CD8-positive, alpha-beta T cell (primary cell): ENCODE measurements at regions of chr7 and their contacts with region 1.

Region 1: DNA sequence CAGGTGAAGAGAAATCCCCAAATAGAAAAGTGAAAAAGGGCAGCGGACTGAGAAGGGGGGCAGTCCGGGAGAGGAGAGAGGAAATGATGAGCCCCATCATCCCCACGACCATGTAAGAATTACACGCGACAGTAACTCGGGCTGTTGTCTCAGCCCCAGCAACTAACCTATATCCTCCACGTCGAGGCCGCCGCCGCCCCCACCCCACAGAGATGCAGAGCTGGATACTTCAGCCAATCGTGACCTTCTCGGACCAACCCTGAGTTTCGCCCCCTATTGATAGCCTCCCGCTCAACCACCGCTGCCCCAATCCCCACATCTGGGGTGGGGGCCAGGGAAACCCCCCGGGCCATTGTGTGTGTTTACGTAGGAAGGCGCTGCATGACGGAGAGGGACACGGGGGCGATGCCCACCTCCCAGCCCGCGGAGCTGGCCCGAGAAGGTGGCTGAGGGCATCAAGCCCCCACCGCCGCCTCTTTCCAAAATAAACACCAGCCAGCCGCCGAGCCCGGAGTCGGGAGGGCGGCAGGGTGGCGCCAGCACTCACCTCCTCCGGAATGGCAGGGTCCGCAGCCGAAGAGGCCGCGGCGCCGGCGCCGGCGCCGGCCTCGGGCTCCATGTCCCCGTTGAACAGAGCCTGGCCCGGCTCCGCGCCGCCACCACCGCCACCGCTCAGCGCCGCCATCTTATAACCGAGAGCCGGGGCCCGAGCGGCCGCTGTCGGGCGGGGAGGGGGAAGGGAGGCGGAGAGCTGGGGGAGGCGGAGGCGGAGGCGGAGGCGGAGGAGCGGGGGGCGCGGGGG is 509 bp downstream of the BRAF start:
- DNase-seq: peak; percentile 55 to 95 (median 75)
- ATAC-seq: peak; percentile 65
- H3K4me3 ChIP-seq: peak overlapping the region; percentile 93
- H3K4me3 Mint-ChIP-seq: no peak overlapping the region
- H3K27ac ChIP-seq: peak overlapping the region; percentile 96 to 97
- H3K27ac Mint-ChIP-seq: no peak overlapping the region
- H3K4me1 ChIP-seq: peaks cover 13% of the 10 kb centered on the region
- H3K4me1 Mint-ChIP-seq: peaks cover 15% of the 10 kb centered on the region
- H3K27me3 ChIP-seq: no peaks in the 10 kb centered on the region
- H3K27me3 Mint-ChIP-seq: no peaks in the 10 kb centered on the region
- CTCF ChIP-seq: no peak

Region 2: DNA sequence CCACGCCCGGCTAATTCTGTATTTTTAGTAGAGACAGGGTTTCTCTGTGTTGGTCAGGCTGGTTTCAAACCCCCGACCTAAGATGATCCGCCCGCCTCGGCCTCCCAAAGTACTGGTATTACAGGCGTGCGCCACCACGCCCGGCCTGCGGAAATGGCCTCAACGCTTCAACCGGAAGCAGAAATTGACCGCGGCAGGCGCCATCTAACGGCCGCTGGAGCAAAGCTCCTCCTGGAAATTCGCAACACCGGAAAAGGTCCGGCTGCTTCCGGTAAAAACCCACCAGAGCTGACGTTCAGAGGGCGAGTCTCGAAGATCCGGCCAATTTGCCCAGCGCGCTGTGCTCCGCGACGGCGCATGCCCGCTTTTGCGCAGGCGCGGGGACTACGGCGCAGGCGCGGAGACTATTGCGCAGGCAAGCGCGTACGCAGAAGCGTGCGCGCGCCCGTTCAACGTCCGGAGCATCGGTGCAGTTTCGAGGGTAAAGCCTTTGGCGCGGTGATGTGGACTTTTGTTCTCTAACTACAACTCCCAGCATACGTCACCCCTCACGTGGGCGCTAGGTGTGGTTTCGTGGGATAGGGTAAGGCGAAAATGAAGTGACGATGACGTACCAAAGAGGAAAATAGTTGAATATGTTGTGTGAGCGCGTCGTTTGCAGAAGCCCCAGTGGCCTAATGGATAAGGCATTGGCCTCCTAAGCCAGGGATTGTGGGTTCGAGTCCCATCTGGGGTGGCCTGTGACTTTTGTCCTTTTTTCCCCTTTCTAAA is 1584.0 kb before region 1 on chr7:
- CTCF ChIA-PET with region 1: no interaction called
- POLR2A ChIA-PET with region 1: no interaction called
- intact Hi-C with region 1: loop called in 1 of 2 experiments (anchors 10 kb)
- DNase-seq: peak; percentile 95 to 100 (median 97)
- ATAC-seq: peak; percentile 80
- H3K4me3 ChIP-seq: peak overlapping the region; percentile 69 to 85
- H3K4me3 Mint-ChIP-seq: peak overlapping the region; percentile 98
- H3K27ac ChIP-seq: peak overlapping the region; percentile 94 to 98
- H3K27ac Mint-ChIP-seq: peak overlapping the region; percentile 100
- H3K4me1 ChIP-seq: peaks cover 13% of the 10 kb centered on the region
- H3K4me1 Mint-ChIP-seq: peaks cover 32% of the 10 kb centered on the region
- H3K27me3 ChIP-seq: no peaks in the 10 kb centered on the region
- H3K27me3 Mint-ChIP-seq: peaks cover 2% of the 10 kb centered on the region
- CTCF ChIP-seq: peak; percentile 36

Region 3: GRCh38 chr7:140673063-140673773 is 251.0 kb before region 1 on chr7:
- CTCF ChIA-PET with region 1: no interaction called
- POLR2A ChIA-PET with region 1: no interaction called
- intact Hi-C with region 1: loop called in 1 of 2 experiments (anchors 5 kb)
- DNase-seq: peak; percentile 30 to 79 (median 65)
- ATAC-seq: peak; percentile 77
- H3K4me3 ChIP-seq: peak overlapping the region; percentile 56 to 64
- H3K4me3 Mint-ChIP-seq: peak overlapping the region; percentile 88
- H3K27ac ChIP-seq: peak overlapping the region; percentile 68 to 80
- H3K27ac Mint-ChIP-seq: peak overlapping the region; percentile 93
- H3K4me1 ChIP-seq: peaks cover 22% of the 10 kb centered on the region
- H3K4me1 Mint-ChIP-seq: peaks cover 41% of the 10 kb centered on the region
- H3K27me3 ChIP-seq: no peaks in the 10 kb centered on the region
- H3K27me3 Mint-ChIP-seq: no peaks in the 10 kb centered on the region
- CTCF ChIP-seq: no peak

Region 4: GRCh38 chr7:140810830-140811556 is 113.2 kb before region 1 on chr7:
- CTCF ChIA-PET with region 1: interaction called, 6 read pairs
- POLR2A ChIA-PET with region 1: no interaction called
- intact Hi-C with region 1: loop called (anchors 2 to 5 kb)
- DNase-seq: peak; percentile 17 to 82 (median 61)
- ATAC-seq: peak; percentile 72
- H3K4me3 ChIP-seq: no peak overlapping the region
- H3K4me3 Mint-ChIP-seq: no peak overlapping the region
- H3K27ac ChIP-seq: no peak overlapping the region
- H3K27ac Mint-ChIP-seq: no peak overlapping the region
- H3K4me1 ChIP-seq: no peaks in the 10 kb centered on the region
- H3K4me1 Mint-ChIP-seq: peaks cover 4% of the 10 kb centered on the region
- H3K27me3 ChIP-seq: no peaks in the 10 kb centered on the region
- H3K27me3 Mint-ChIP-seq: no peaks in the 10 kb centered on the region
- CTCF ChIP-seq: peak; percentile 76

Region 5: GRCh38 chr7:140899883-140900282 is 24.3 kb before region 1 on chr7:
- CTCF ChIA-PET with region 1: no interaction called
- POLR2A ChIA-PET with region 1: interaction called, 3 read pairs
- intact Hi-C with region 1: loop called in 1 of 2 experiments (anchors 1 kb)
- DNase-seq: no peak
- ATAC-seq: no peak
- H3K4me3 ChIP-seq: no peak overlapping the region
- H3K4me3 Mint-ChIP-seq: no peak overlapping the region
- H3K27ac ChIP-seq: no peak overlapping the region
- H3K27ac Mint-ChIP-seq: no peak overlapping the region
- H3K4me1 ChIP-seq: peaks cover 29% of the 10 kb centered on the region
- H3K4me1 Mint-ChIP-seq: peaks cover 86% of the 10 kb centered on the region
- H3K27me3 ChIP-seq: no peaks in the 10 kb centered on the region
- H3K27me3 Mint-ChIP-seq: no peaks in the 10 kb centered on the region
- CTCF ChIP-seq: no peak